Right cardiac atrium (tissue), 5 donors: ENCODE measurements at regions of chr22 and their contacts with region 1.

Region 1: GRCh38 chr22:41157083-41157482 is 48.0 kb upstream of the L3MBTL2 start:
- DNase-seq: no peak
- ATAC-seq: no peak
- H3K4me3 ChIP-seq: no peak overlapping the region
- H3K27ac ChIP-seq: no peak overlapping the region
- H3K4me1 ChIP-seq: no peaks in the 10 kb centered on the region
- H3K27me3 ChIP-seq: no peaks in the 10 kb centered on the region

Region 2: GRCh38 chr22:40838486-40838885 is 318.6 kb before region 1 on chr22:
- intact Hi-C with region 1: loop called in 2 of 4 experiments (anchors 10 kb)
- DNase-seq: no peak
- ATAC-seq: no peak
- H3K4me3 ChIP-seq: no peak overlapping the region
- H3K27ac ChIP-seq: no peak overlapping the region
- H3K4me1 ChIP-seq: no peaks in the 10 kb centered on the region
- H3K27me3 ChIP-seq: no peaks in the 10 kb centered on the region

Region 3: GRCh38 chr22:40844951-40845350 is 312.1 kb before region 1 on chr22:
- intact Hi-C with region 1: loop called in 1 of 4 experiments (anchors 10 kb)
- DNase-seq: no peak
- ATAC-seq: no peak
- H3K4me3 ChIP-seq: no peak overlapping the region
- H3K27ac ChIP-seq: no peak overlapping the region
- H3K4me1 ChIP-seq: no peaks in the 10 kb centered on the region
- H3K27me3 ChIP-seq: no peaks in the 10 kb centered on the region

Region 4: GRCh38 chr22:41015003-41015402 is 142.1 kb before region 1 on chr22:
- intact Hi-C with region 1: no loop called
- DNase-seq: no peak
- ATAC-seq: no peak
- H3K4me3 ChIP-seq: no peak overlapping the region
- H3K27ac ChIP-seq: no peak overlapping the region
- H3K4me1 ChIP-seq: no peaks in the 10 kb centered on the region
- H3K27me3 ChIP-seq: no peaks in the 10 kb centered on the region